ENCODE measurements at regions of chr19 and their contacts with region 1.

Region 1: DNA sequence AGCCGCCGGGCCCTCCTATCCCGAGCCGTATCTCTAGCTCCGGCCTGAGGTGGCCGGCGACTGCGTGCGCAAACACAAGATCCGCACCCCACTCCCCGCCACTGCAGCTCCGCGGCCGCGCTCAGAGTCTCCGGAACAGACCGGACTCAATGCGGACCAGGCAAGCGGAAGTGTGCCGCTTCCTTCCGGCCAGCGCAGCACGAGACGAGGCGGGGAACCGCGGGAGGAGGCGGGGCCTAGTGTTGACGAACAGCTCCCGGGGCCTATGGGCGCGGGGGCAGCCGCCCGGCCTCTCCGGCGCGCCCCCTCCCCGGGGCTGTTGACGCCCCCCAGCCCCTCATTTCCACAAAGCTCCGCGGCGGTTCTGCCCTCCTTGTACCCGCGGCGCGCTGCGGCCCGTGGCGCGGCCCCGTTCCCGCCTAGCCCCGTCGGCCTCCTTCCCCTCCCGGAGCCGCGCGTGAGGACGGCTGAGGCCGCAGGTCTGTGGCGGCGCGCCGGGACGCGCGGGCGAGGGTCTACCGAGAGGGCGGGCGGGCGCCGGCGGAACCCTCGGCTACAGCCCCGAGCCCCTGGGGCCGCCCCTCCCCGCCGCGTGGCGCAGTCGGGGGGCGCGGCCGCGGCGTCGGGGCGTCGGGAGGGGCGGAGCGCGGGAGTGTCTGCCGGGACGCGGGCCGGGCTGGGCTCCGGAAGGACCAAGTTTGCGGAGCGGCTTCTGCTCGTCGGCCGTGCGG is at the start of gene DPY19L3:
- DNase-seq: peak; percentile 94
- ATAC-seq: peak; percentile 98 to 99
- H3K4me3 ChIP-seq: peak within 1 kb of the TSS; percentile 74 to 99 (median 90)
- H3K27ac ChIP-seq: peak within 1 kb of the TSS; percentile 98 to 100 (median 98)
- H3K4me1 ChIP-seq: peaks cover 12 to 20% of the 10 kb centered on the region in 2 donors
- H3K27me3 ChIP-seq: no peaks in the 10 kb centered on the region
- CTCF ChIP-seq: no peak
- POLR2A ChIP-seq: peak; percentile 90 to 96
- total RNA-seq, gene DPY19L3: 2.3 to 9.9 (median 7.5) TPM

Region 2: DNA sequence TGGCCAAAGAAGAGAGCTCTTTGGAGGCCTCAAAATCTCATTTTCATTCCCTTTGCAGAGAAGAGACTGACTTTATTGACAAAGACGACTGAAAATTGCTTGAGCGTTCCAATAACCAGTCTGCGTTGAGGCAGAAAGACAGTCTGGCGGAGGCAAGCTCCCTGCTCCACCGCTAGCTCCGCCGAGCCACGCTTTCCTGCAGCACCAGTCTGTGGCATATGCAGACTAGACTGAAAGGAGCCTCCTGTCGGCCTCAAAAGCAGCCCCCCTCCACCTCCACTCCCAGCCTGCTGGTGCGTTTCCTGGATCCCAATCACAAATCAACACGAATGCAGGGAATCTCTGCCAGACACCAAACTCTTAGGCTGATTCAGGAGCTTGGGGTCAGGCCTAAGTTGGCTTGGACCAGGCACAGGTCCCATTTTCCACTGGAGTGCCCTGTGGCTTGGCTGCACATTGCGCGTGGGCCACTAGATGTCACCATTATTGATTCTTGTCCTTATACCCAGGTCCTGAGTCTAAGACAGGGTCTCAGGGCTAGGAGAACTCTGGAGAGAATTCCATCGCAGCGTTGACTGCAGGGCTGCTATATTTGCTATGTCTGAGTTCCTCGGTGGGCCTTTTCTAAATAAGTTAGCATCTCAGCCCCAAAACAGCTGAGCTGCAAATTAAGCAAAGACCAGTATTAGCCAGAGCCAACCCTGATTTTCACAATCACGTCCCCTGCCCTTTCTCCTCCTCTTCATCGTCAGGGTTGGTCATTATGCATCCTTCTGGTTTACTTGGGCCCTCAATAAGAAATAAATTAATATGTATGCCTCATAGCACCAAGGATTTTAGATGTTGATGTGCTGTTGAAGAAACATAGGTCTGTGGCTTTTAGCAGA is 65.4 kb before region 1 on chr19:
- in situ Hi-C with region 1: loop called in 1 of 4 experiments (anchors 10 kb)
- intact Hi-C with region 1: loop called (anchors 1 kb)
- DNase-seq: peak in 1 of 2 donors; percentile 48
- ATAC-seq: peak; percentile 46 to 79
- H3K4me3 ChIP-seq: no peak overlapping the region
- H3K27ac ChIP-seq: no peak overlapping the region
- H3K4me1 ChIP-seq: no peaks in the 10 kb centered on the region
- H3K27me3 ChIP-seq: no peaks in the 10 kb centered on the region
- CTCF ChIP-seq: peak; percentile 36 to 73 (median 60)
- POLR2A ChIP-seq: no peak

Region 3: GRCh38 chr19:32345261-32346207 is 60.1 kb before region 1 on chr19 and contains the start of gene ZNF507:
- in situ Hi-C with region 1: loop called in 1 of 4 experiments (anchors 10 kb)
- intact Hi-C with region 1: loop called (anchors 1 kb)
- DNase-seq: peak; percentile 60 to 75
- ATAC-seq: peak; percentile 89 to 91
- H3K4me3 ChIP-seq: peak within 1 kb of the TSS; percentile 83 to 97 (median 87)
- H3K27ac ChIP-seq: peak within 1 kb of the TSS; percentile 75 to 86 (median 84)
- H3K4me1 ChIP-seq: peaks cover 28 to 32% of the 10 kb centered on the region in 2 donors
- H3K27me3 ChIP-seq: no peaks in the 10 kb centered on the region
- CTCF ChIP-seq: peak in 1 of 5 experiments; percentile 7
- POLR2A ChIP-seq: no peak
- total RNA-seq, gene ZNF507: 11.9 to 21.8 (median 17.8) TPM

Region 4: GRCh38 chr19:32357720-32358119 is 47.9 kb before region 1 on chr19:
- in situ Hi-C with region 1: loop called in 1 of 4 experiments (anchors 10 kb)
- intact Hi-C with region 1: no loop called
- DNase-seq: no peak
- ATAC-seq: no peak
- H3K4me3 ChIP-seq: no peak overlapping the region
- H3K27ac ChIP-seq: no peak overlapping the region
- H3K4me1 ChIP-seq: peaks cover 0 to 2% of the 10 kb centered on the region in 2 donors
- H3K27me3 ChIP-seq: no peaks in the 10 kb centered on the region
- CTCF ChIP-seq: peak in 1 of 5 experiments; percentile 30
- POLR2A ChIP-seq: no peak

Region 5: GRCh38 chr19:33193865-33194362 is 788.3 kb after region 1 on chr19 and contains the start of gene LRP3:
- in situ Hi-C with region 1: no loop called
- intact Hi-C with region 1: no loop called
- DNase-seq: peak in 1 of 2 donors; percentile 24
- ATAC-seq: peak; percentile 61 to 78
- H3K4me3 ChIP-seq: peak within 1 kb of the TSS; percentile 55 to 66 (median 65)
- H3K27ac ChIP-seq: peak within 1 kb of the TSS; percentile 24 to 62 (median 48)
- H3K4me1 ChIP-seq: peaks cover 5 to 12% of the 10 kb centered on the region in 2 donors
- H3K27me3 ChIP-seq: no peaks in the 10 kb centered on the region
- CTCF ChIP-seq: no peak
- POLR2A ChIP-seq: no peak
- total RNA-seq, gene LRP3: 18.3 to 29.3 (median 25.1) TPM